Adrenal gland (tissue), 19 donors: ENCODE measurements at regions of chr14 and their contacts with region 1.

Region 1: GRCh38 chr14:69879175-69880043 is at the start of gene SMOC1:
- DNase-seq: peak; percentile 54 to 92 (median 62)
- H3K4me3 ChIP-seq: peak within 1 kb of the TSS in 1 of 4 donors; percentile 50
- H3K27ac ChIP-seq: no peak within 1 kb of the TSS
- H3K4me1 ChIP-seq: peaks cover 0 to 4% of the 10 kb centered on the region in 2 donors
- H3K27me3 ChIP-seq: peaks cover 13% of the 10 kb centered on the region
- CTCF ChIP-seq: no peak
- POLR2A ChIP-seq: peak; percentile 41 to 82
- total RNA-seq, gene SMOC1: 0.33 to 7.3 (median 3.7) TPM

Region 2: GRCh38 chr14:69346710-69347109 is 532.7 kb before region 1 on chr14:
- intact Hi-C with region 1: no loop called
- DNase-seq: peak in 4 of 7 donors; percentile 12 to 57 (median 26)
- H3K4me3 ChIP-seq: no peak overlapping the region
- H3K27ac ChIP-seq: no peak overlapping the region
- H3K4me1 ChIP-seq: peaks cover 0 to 12% of the 10 kb centered on the region in 2 donors
- H3K27me3 ChIP-seq: no peaks in the 10 kb centered on the region
- CTCF ChIP-seq: peak in 4 of 6 experiments; percentile 14 to 47 (median 40)
- POLR2A ChIP-seq: no peak

Region 3: GRCh38 chr14:70000601-70001000 is 121.2 kb after region 1 on chr14:
- intact Hi-C with region 1: loop called in 1 of 2 experiments (anchors 10 kb)
- DNase-seq: no peak
- H3K4me3 ChIP-seq: no peak overlapping the region
- H3K27ac ChIP-seq: no peak overlapping the region
- H3K4me1 ChIP-seq: no peaks in the 10 kb centered on the region
- H3K27me3 ChIP-seq: no peaks in the 10 kb centered on the region
- CTCF ChIP-seq: no peak
- POLR2A ChIP-seq: no peak

Region 4: DNA sequence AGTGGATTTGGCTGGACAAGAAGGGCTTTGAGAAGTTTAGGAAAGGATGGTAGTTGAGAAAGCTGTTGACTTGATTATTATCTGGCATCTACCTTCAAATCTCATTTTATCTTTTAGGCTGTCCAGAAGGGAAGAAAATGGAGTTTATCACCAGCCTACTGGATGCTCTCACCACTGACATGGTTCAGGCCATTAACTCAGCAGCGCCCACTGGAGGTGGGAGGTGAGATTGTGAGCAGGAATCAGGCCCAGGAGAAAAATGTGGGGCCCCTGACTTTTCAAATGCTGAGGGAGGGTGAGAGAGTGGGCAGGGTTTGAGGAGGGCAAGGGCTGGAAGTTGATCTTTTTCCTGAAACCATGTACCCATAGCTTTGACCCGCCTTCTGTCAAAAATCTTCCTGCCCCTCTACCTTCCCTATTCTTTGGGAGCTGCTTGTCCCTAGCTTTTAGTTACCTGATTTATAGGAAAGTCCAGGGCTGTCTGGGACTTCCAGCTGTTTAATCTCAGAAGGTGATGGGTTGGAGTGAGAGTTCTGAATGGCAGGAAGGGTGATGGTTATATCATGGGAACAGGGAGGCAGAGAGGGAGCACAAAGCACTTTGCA is 134.0 kb after region 1 on chr14:
- intact Hi-C with region 1: loop called (anchors 5 to 10 kb)
- DNase-seq: peak in 6 of 7 donors; percentile 43 to 75 (median 64)
- H3K4me3 ChIP-seq: no peak overlapping the region
- H3K27ac ChIP-seq: no peak overlapping the region
- H3K4me1 ChIP-seq: peaks cover 3 to 4% of the 10 kb centered on the region in 2 donors
- H3K27me3 ChIP-seq: no peaks in the 10 kb centered on the region
- CTCF ChIP-seq: peak; percentile 70 to 83 (median 80)
- POLR2A ChIP-seq: no peak